A549 (cell line): ENCODE measurements at regions of chr12 and their contacts with region 1.

Region 1: DNA sequence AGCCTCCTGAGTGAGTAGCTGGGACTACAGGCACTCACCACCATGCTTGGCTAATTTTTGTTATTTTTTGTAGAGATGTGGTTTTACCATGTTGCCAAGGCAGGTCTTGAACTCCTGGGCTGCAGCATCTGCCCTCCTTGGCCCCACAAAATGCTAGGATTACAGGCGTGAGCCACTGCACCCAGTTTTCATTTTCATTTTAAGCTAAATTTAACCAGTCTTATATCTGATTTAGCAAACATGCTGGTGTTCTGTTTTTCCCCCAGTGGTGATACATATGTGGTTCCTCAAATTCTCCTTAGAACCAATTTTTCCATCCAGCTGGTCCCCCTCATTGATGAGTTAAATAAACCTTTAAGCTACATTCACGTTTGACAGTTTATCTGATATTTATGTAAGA is 43.8 kb upstream of the BICD1 start:
- DNase-seq: no peak
- ATAC-seq: no peak
- H3K4me3 ChIP-seq: no peak overlapping the region
- H3K27ac ChIP-seq: peak overlapping the region in 1 of 2 experiments; percentile 35; a peak in 1 of 6 replicates
- H3K4me1 ChIP-seq: no peaks in the 10 kb centered on the region
- CTCF ChIP-seq: no peak
- EP300 ChIP-seq: no peak
- POLR2A ChIP-seq: no peak
- RAD21 ChIP-seq: no peak

Region 2: DNA sequence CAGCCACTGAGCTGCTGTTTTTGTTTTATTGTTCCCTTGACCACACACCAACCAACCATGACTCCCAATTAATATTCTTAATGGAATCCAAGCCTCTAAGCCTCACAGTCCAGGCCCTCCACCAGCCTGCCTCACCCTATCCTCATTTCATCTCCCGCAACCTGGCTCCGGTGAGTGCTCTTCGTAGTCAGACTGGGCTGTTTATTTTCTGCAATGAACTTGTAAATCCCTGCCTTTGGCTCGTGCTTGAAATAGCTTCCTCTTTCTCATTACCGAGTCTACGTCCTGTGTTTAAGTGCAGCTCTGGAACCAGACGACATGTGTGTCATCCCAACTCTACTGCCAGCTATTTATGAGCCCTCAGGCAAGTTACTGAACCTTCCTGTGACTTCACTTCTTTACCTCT is 415.8 kb before region 1 on chr12:
- CTCF ChIA-PET with region 1: interaction called, 14 read pairs
- POLR2A ChIA-PET with region 1: no interaction called
- DNase-seq: no peak
- ATAC-seq: no peak
- H3K4me3 ChIP-seq: no peak overlapping the region
- H3K27ac ChIP-seq: peak overlapping the region in 1 of 2 experiments; percentile 20; a peak in 1 of 6 replicates
- H3K4me1 ChIP-seq: peaks cover 23% of the 10 kb centered on the region; the same call in 2 of the 3 replicates
- CTCF ChIP-seq: no peak
- EP300 ChIP-seq: no peak
- POLR2A ChIP-seq: no peak
- RAD21 ChIP-seq: no peak

Region 3: GRCh38 chr12:32051559-32052414 is 11.1 kb before region 1 on chr12:
- CTCF ChIA-PET with region 1: interaction called, 22 read pairs
- POLR2A ChIA-PET with region 1: no interaction called
- DNase-seq: peak; percentile 62 to 86
- ATAC-seq: peak; percentile 95 to 97
- H3K4me3 ChIP-seq: no peak overlapping the region
- H3K27ac ChIP-seq: peak overlapping the region; percentile 68 to 74
- H3K4me1 ChIP-seq: peaks cover 28% of the 10 kb centered on the region
- CTCF ChIP-seq: no peak
- EP300 ChIP-seq: peak in 1 of 2 experiments; percentile 32; a peak in 1 of 5 replicates
- POLR2A ChIP-seq: no peak
- RAD21 ChIP-seq: peak in 1 of 2 experiments; percentile 16; a peak in 1 of 5 replicates

Region 4: DNA sequence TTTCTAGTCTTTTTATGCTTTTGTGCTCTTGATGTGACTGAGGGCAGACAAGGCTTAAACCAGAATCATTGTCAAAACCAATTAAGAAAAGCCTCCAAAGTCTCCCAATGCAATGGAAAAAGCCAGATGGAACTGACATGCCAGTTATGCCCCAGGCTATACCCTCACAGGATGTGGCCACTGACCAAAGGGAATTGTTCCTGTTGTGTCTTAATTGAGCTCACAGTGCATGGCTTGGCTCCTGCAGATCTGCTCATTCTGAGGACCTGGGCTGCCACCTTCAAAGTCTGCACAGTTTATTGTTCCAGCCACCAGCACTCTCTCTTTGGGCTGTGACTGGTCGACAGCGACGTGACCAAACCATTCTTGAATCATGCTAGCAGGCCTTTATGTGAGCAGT is 26.7 kb after region 1 on chr12:
- CTCF ChIA-PET with region 1: interaction called, 12 read pairs
- POLR2A ChIA-PET with region 1: interaction called, 4 read pairs
- DNase-seq: no peak
- ATAC-seq: no peak
- H3K4me3 ChIP-seq: no peak overlapping the region
- H3K27ac ChIP-seq: no peak overlapping the region
- H3K4me1 ChIP-seq: no peaks in the 10 kb centered on the region
- CTCF ChIP-seq: no peak
- EP300 ChIP-seq: no peak
- POLR2A ChIP-seq: no peak
- RAD21 ChIP-seq: no peak

Region 5: GRCh38 chr12:32305163-32305562 is 242.3 kb after region 1 on chr12:
- CTCF ChIA-PET with region 1: interaction called, 42 read pairs
- POLR2A ChIA-PET with region 1: no interaction called
- DNase-seq: peak; percentile 15 to 52
- ATAC-seq: 0 out of 6 replicates have a peak, but pooled peaks of 1 of the 2 experiments have one; percentile 36
- H3K4me3 ChIP-seq: no peak overlapping the region
- H3K27ac ChIP-seq: peak overlapping the region in 1 of 2 experiments; percentile 54; a peak in 4 of 6 replicates
- H3K4me1 ChIP-seq: peaks cover 15% of the 10 kb centered on the region; the same call in 2 of the 3 replicates
- CTCF ChIP-seq: peak; percentile 62; the same call in 2 of the 3 replicates
- EP300 ChIP-seq: no peak
- POLR2A ChIP-seq: no peak
- RAD21 ChIP-seq: peak; percentile 87 to 90